ENCODE measurements at regions of chr6 and their contacts with region 1.

Region 1: GRCh38 chr6:50952092-50952907 is 133.6 kb downstream of the TFAP2B start:
- DNase-seq: no peak
- H3K4me3 ChIP-seq: no peak overlapping the region
- H3K4me3 Mint-ChIP-seq: no peak overlapping the region
- H3K27ac ChIP-seq: no peak overlapping the region
- H3K27ac Mint-ChIP-seq: no peak overlapping the region
- H3K4me1 ChIP-seq: no peaks in the 10 kb centered on the region
- H3K4me1 Mint-ChIP-seq: no peaks in the 10 kb centered on the region
- H3K27me3 ChIP-seq: no peaks in the 10 kb centered on the region
- H3K27me3 Mint-ChIP-seq: peaks cover 0 to 3% (median 0%) of the 10 kb centered on the region in 3 donors
- CTCF ChIP-seq: no peak

Region 2: GRCh38 chr6:50905297-50905696 is 47.0 kb before region 1 on chr6:
- intact Hi-C with region 1: loop called in 1 of 2 experiments (anchors 2 kb)
- DNase-seq: no peak
- H3K4me3 ChIP-seq: no peak overlapping the region
- H3K4me3 Mint-ChIP-seq: no peak overlapping the region
- H3K27ac ChIP-seq: no peak overlapping the region
- H3K27ac Mint-ChIP-seq: no peak overlapping the region
- H3K4me1 ChIP-seq: no peaks in the 10 kb centered on the region
- H3K4me1 Mint-ChIP-seq: no peaks in the 10 kb centered on the region
- H3K27me3 ChIP-seq: no peaks in the 10 kb centered on the region
- H3K27me3 Mint-ChIP-seq: peaks cover 0 to 2% (median 2%) of the 10 kb centered on the region in 3 donors
- CTCF ChIP-seq: no peak

Region 3: GRCh38 chr6:50922579-50923525 is 29.4 kb before region 1 on chr6:
- intact Hi-C with region 1: no loop called
- DNase-seq: no peak
- H3K4me3 ChIP-seq: no peak overlapping the region
- H3K4me3 Mint-ChIP-seq: no peak overlapping the region
- H3K27ac ChIP-seq: no peak overlapping the region
- H3K27ac Mint-ChIP-seq: peak overlapping the region in 1 of 7 donors; percentile 12
- H3K4me1 ChIP-seq: no peaks in the 10 kb centered on the region
- H3K4me1 Mint-ChIP-seq: no peaks in the 10 kb centered on the region
- H3K27me3 ChIP-seq: no peaks in the 10 kb centered on the region
- H3K27me3 Mint-ChIP-seq: peaks cover 0 to 2% (median 0%) of the 10 kb centered on the region in 3 donors
- CTCF ChIP-seq: no peak